HepG2 (cell line): ENCODE measurements at regions of chr12 and their contacts with region 1.

Region 1: DNA sequence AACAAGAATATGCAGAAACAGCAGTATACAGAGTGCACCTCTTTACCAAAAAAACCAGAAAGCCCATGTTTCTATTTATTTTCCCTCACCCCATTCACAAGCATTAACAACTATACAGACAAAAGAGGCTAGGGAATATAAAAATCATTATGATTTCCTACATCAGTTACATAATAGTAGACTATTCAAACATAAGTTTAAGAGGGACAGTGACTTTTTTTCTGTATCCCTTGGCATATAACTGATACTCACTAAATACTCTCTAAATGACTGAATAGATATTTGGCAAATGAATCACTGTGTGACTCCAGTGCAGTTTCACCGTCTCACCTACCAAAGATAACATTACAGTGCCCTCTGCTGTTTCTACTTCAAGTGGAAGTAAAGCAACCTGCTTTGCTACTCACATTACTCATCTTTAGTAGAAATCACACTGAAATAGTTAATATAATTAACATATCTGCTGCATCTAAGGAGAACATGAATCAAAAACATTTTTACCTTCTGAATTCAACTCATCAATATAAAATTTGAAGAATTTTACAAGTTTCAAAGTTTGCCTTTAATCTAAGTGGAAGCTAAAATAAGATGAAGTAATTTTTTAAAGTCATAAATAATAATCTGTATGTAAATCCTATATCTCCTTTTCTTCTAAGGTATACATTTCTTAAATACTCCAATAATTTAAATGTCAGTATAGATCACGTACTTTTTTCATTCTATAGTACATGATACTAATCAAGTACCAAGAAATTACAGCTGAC is 103.8 kb downstream of the OSBPL8 start:
- DNase-seq: peak; percentile 62
- ATAC-seq: peak; percentile 90
- H3K4me3 ChIP-seq: no peak overlapping the region
- H3K27ac ChIP-seq: no peak overlapping the region
- H3K4me1 ChIP-seq: peaks cover 12% of the 10 kb centered on the region
- H3K27me3 ChIP-seq: no peaks in the 10 kb centered on the region
- CTCF ChIP-seq: peak; percentile 76
- EP300 ChIP-seq: no peak
- POLR2A ChIP-seq: no peak
- RAD21 ChIP-seq: peak; percentile 43; the same call in 1 of the 2 replicates

Region 2: DNA sequence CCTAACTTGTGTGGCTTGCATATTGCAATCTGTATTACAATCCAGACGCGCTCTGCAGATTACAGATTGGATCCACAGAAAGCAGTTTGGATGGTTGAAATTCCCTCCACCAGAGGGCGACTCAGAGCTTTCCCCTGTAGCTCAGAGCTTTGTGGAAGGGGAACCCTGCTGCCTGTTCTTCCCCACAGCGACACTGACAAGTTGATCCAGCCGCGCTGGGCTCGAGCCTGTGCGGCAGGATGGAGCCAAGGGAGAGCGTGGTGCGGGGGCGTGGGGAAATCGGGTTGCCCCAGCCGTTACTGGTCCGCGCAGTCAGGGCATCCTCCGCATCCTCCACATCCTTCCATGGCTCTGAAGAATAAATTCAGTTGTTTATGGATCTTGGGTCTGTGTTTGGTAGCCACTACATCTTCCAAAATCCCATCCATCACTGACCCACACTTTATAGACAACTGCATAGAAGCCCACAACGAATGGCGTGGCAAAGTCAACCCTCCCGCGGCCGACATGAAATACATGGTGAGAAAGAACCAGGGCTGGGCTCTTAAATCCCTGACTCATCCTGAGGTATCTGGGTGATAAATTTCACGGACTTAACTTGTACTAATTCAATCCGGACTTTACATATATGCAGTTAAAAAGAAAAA is 1121.3 kb before region 1 on chr12 and contains the start of gene GLIPR1L1:
- CTCF ChIA-PET with region 1: no interaction called
- POLR2A ChIA-PET with region 1: no interaction called
- in situ Hi-C with region 1: no loop called
- intact Hi-C with region 1: loop called (anchors 5 kb)
- DNase-seq: peak; percentile 71
- ATAC-seq: peak; percentile 83
- H3K4me3 ChIP-seq: no peak within 1 kb of the TSS; a peak in 1 of 6 replicates
- H3K27ac ChIP-seq: no peak within 1 kb of the TSS
- H3K4me1 ChIP-seq: no peaks in the 10 kb centered on the region
- H3K27me3 ChIP-seq: no peaks in the 10 kb centered on the region
- CTCF ChIP-seq: peak; percentile 91
- EP300 ChIP-seq: no peak
- POLR2A ChIP-seq: no peak
- RAD21 ChIP-seq: peak; percentile 46; the same call in 1 of the 2 replicates
- total RNA-seq, gene GLIPR1L1: not detected in 2 replicates

Region 3: GRCh38 chr12:75480469-75480949 is 975.3 kb before region 1 on chr12 and contains the start of gene GLIPR1:
- CTCF ChIA-PET with region 1: interaction called, 3 read pairs
- POLR2A ChIA-PET with region 1: no interaction called
- in situ Hi-C with region 1: no loop called
- intact Hi-C with region 1: loop called (anchors 5 kb)
- DNase-seq: peak; percentile 45
- ATAC-seq: peak; percentile 90
- H3K4me3 ChIP-seq: peak within 1 kb of the TSS; percentile 44 to 50 (median 47); a peak in 5 of 6 replicates
- H3K27ac ChIP-seq: no peak within 1 kb of the TSS
- H3K4me1 ChIP-seq: peaks cover 26% of the 10 kb centered on the region
- H3K27me3 ChIP-seq: no peaks in the 10 kb centered on the region
- CTCF ChIP-seq: no peak
- EP300 ChIP-seq: no peak
- POLR2A ChIP-seq: 0 out of 4 replicates have a peak, but pooled peaks of 1 of the 2 experiments have one; percentile 23
- RAD21 ChIP-seq: no peak
- total RNA-seq, gene GLIPR1: 2.8 and 5.0 TPM in 2 replicates

Region 4: GRCh38 chr12:76158518-76159321 is 297.0 kb before region 1 on chr12:
- CTCF ChIA-PET with region 1: interaction called, 4 read pairs
- POLR2A ChIA-PET with region 1: no interaction called
- in situ Hi-C with region 1: no loop called
- intact Hi-C with region 1: loop called (anchors 2 kb)
- DNase-seq: peak; percentile 53
- ATAC-seq: peak; percentile 100
- H3K4me3 ChIP-seq: peak overlapping the region in 1 of 3 experiments; percentile 39; a peak in 1 of 6 replicates
- H3K27ac ChIP-seq: no peak overlapping the region
- H3K4me1 ChIP-seq: 0 out of 2 replicates have a peak, but pooled peaks cover 4% of the 10 kb centered on the region
- H3K27me3 ChIP-seq: no peaks in the 10 kb centered on the region; a peak in 1 of 5 replicates
- CTCF ChIP-seq: peak; percentile 85
- EP300 ChIP-seq: no peak
- POLR2A ChIP-seq: no peak
- RAD21 ChIP-seq: no peak; the same call in 1 of the 2 replicates